ENCODE measurements at regions of chr17 and their contacts with region 1.

Region 1: GRCh38 chr17:81821603-81822311 is 11.3 kb downstream of the MCRIP1 start:
- DNase-seq: peak; percentile 85 to 93
- ATAC-seq: peak; percentile 61 to 90
- H3K4me3 ChIP-seq: no peak overlapping the region
- H3K27ac ChIP-seq: peak overlapping the region; percentile 54 to 81
- H3K4me1 ChIP-seq: peaks cover 24% of the 10 kb centered on the region
- CTCF ChIP-seq: peak; percentile 63
- EP300 ChIP-seq: no peak
- POLR2A ChIP-seq: no peak
- RAD21 ChIP-seq: peak; percentile 31 to 59; a peak in 2 of 5 replicates

Region 2: DNA sequence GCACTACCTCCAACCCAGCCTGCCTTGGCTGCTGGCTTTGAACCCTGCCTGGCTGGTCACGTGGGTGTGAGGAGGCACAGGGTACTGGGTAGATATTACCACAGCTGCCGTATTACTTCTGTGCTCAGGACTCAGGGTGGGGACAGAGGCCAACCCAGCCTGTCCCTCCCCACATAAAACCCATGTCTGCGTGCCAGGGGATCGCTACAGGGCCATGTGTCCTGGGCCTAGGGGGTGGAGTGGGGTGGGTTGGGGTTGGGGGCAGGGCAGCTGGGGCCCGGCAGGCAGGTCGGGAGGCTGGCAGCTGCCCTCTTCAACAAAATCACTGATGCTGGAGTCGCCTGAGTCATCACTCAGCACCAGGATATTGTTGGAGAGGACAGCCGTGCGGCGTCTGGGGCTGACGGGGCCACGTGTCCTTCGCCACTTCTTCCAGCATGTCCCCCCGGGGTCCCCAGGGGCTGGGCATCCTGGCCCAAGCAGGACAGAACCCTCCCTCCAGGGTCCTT is 696.1 kb before region 1 on chr17:
- CTCF ChIA-PET with region 1: no interaction called
- POLR2A ChIA-PET with region 1: no interaction called
- DNase-seq: no peak
- ATAC-seq: 0 out of 6 replicates have a peak, but pooled peaks of 1 of the 2 experiments have one; percentile 1
- H3K4me3 ChIP-seq: no peak overlapping the region
- H3K27ac ChIP-seq: 0 out of 6 replicates have a peak overlapping the region, but pooled peaks of 1 of the 2 experiments have one; percentile 23
- H3K4me1 ChIP-seq: peaks cover 10% of the 10 kb centered on the region
- CTCF ChIP-seq: no peak
- EP300 ChIP-seq: no peak
- POLR2A ChIP-seq: no peak
- RAD21 ChIP-seq: no peak

Region 3: GRCh38 chr17:81808778-81809555 is 12.8 kb before region 1 on chr17:
- CTCF ChIA-PET with region 1: interaction called, 25 read pairs
- POLR2A ChIA-PET with region 1: no interaction called
- DNase-seq: no peak
- ATAC-seq: peak; percentile 4 to 9; a peak in 4 of 6 replicates
- H3K4me3 ChIP-seq: no peak overlapping the region
- H3K27ac ChIP-seq: no peak overlapping the region
- H3K4me1 ChIP-seq: peaks cover 30% of the 10 kb centered on the region
- CTCF ChIP-seq: no peak
- EP300 ChIP-seq: no peak
- POLR2A ChIP-seq: no peak
- RAD21 ChIP-seq: no peak

Region 4: GRCh38 chr17:81854974-81855774 is 33.4 kb after region 1 on chr17:
- CTCF ChIA-PET with region 1: interaction called, 16 read pairs
- POLR2A ChIA-PET with region 1: no interaction called
- DNase-seq: no peak
- ATAC-seq: peak; percentile 32 to 50; a peak in 4 of 6 replicates
- H3K4me3 ChIP-seq: no peak overlapping the region
- H3K27ac ChIP-seq: no peak overlapping the region
- H3K4me1 ChIP-seq: peaks cover 12% of the 10 kb centered on the region; the same call in 2 of the 3 replicates
- CTCF ChIP-seq: no peak
- EP300 ChIP-seq: no peak
- POLR2A ChIP-seq: no peak
- RAD21 ChIP-seq: peak in 1 of 2 experiments; percentile 47; a peak in 3 of 5 replicates